ENCODE measurements at regions of chr18 and their contacts with region 1.

Region 1: DNA sequence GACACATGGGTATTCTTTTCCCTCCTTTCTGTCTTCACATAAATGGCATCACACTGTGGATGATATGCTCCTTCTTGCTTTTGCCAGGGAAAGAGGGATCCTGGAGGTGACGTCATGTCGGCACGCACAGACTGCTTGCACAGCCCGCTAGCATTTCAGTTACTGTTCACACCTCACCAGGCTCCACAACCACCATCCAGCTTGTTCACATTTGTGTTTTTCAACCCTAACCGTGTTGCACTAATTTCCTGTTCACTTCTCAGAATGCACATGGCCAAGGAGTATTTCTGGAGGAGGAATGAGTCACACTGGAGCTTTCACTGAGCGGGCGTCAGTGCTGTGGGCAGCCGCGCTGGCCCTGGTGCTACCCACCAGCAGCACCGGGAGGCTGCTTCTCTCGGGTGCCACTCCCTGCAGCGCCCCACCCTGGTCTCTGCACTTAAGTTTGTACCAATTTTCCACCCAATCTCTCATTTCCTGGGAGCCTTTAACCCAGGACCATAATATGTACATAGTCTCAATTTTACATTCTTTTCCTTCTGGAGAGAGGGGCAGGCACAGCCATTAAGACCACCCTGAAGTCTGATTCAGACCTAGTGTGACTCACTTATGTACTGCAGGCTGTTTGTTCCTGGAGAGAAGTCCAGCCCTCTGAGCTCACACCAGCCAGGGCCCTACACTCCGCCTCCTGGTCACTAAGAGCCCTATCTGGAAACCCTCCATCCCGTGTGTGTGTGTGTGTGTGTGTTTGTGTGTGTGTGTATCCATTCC is 65.1 kb downstream of the MBP start:
- DNase-seq: peak; percentile 67 to 90
- H3K4me3 ChIP-seq: no peak overlapping the region
- H3K27ac ChIP-seq: peak overlapping the region; percentile 69 to 84
- H3K4me1 ChIP-seq: peaks cover 8 to 42% of the 10 kb centered on the region in 2 donors
- H3K27me3 ChIP-seq: no peaks in the 10 kb centered on the region
- CTCF ChIP-seq: peak in 1 of 3 experiments; percentile 24

Region 2: GRCh38 chr18:76822510-76823160 is 244.8 kb before region 1 on chr18 and contains the start of gene ZNF236:
- intact Hi-C with region 1: loop called (anchors 5 kb)
- DNase-seq: peak in 1 of 2 donors; percentile 84
- H3K4me3 ChIP-seq: peak within 1 kb of the TSS; percentile 78 to 93
- H3K27ac ChIP-seq: peak within 1 kb of the TSS; percentile 92 to 96
- H3K4me1 ChIP-seq: peaks cover 0 to 9% of the 10 kb centered on the region in 2 donors
- H3K27me3 ChIP-seq: no peaks in the 10 kb centered on the region
- CTCF ChIP-seq: no peak
- total RNA-seq, gene ZNF236: 9.7 TPM

Region 3: GRCh38 chr18:77087393-77088141 is 20.1 kb after region 1 on chr18:
- intact Hi-C with region 1: loop called (anchors 2 kb)
- DNase-seq: peak in 1 of 2 donors; percentile 71
- H3K4me3 ChIP-seq: peak overlapping the region; percentile 27 to 58
- H3K27ac ChIP-seq: peak overlapping the region; percentile 68 to 85
- H3K4me1 ChIP-seq: peaks cover 0 to 24% of the 10 kb centered on the region in 2 donors
- H3K27me3 ChIP-seq: no peaks in the 10 kb centered on the region
- CTCF ChIP-seq: no peak

Region 4: GRCh38 chr18:77101410-77102258 is 34.2 kb after region 1 on chr18:
- intact Hi-C with region 1: loop called (anchors 1 kb)
- DNase-seq: peak; percentile 84 to 94
- H3K4me3 ChIP-seq: peak overlapping the region in 1 of 2 donors; percentile 0
- H3K27ac ChIP-seq: peak overlapping the region; percentile 73 to 84
- H3K4me1 ChIP-seq: peaks cover 16 to 50% of the 10 kb centered on the region in 2 donors
- H3K27me3 ChIP-seq: no peaks in the 10 kb centered on the region
- CTCF ChIP-seq: no peak

Region 5: DNA sequence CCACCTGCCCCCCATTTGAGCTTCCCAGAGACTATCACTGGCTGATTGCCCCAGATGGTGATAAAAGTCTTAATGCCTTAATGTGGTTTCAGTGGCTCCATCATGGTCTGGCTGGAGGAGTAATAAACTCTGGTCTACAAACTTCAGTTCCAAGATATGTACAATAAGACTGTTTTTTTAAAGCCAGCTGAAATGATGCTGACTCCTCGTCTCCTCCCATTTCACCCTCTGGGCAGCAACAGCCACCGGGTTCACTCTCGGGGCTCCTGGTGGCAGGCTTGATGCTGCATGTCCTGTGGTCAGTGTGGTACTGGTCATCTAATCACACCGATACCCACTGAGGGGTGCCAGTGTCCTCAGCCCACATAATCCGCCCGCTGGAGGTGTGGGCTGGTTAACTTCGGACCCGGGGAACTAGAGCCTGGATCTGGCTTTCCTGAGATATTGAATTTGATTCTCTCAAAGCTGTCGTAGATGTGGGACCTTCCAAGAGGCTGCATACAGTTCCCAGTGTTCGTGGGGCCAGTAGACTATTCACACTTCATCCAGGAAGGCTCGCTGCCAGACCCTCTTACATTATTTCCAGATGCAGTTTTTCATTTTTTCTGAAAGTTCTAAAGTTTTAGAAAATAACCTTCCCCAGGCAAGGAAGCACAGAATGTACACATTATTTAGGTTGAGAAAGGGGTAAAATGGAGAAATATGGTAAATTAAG is 277.5 kb after region 1 on chr18:
- intact Hi-C with region 1: no loop called
- DNase-seq: no peak
- H3K4me3 ChIP-seq: no peak overlapping the region
- H3K27ac ChIP-seq: no peak overlapping the region
- H3K4me1 ChIP-seq: no peaks in the 10 kb centered on the region
- H3K27me3 ChIP-seq: no peaks in the 10 kb centered on the region
- CTCF ChIP-seq: no peak